ENCODE measurements at regions of chr14 and their contacts with region 1.

Region 1: DNA sequence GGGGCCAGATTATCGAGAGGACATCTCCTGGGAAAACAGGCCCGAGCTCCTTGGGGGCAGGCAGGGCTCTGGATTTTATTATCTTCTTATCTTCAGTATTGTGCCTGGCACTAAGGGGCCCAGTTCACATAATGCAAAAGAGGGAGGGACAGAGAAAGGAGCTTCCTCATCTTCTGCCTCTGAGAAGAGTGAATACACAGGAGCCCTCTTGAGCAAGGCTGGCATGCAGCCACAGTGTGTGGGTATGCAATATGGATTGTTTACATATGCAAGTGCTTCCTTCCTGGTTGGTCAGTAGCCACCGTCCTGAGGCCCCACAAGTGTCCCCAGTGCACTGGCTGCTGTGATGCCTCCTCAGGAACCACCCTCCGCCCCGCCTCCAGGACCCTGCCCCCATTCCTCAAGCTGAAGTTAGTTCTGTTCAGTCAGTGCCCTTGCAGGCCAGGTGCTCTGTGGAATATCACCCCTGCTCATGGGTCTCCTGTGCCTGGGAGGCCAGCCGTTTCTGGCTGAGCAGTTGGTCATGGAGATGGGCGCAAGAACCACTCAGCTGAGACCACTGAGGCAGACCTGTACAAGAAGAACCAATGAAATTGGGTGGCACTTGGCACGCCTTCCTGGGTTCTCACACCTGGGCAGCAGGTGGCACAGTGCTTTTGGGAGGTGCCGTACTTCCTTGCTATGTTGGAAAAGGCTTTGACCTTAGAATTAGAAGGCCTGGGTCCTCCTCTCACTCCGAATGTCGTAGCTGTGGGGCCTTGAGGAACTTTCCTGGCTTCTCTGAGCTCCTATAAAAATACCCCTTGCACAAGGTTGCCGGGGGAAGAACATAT is 35.1 kb upstream of the ACTN1 start:
- DNase-seq: no peak
- H3K4me3 ChIP-seq: no peak overlapping the region
- H3K27ac ChIP-seq: no peak overlapping the region; the same call in 1 of the 2 replicates
- H3K4me1 ChIP-seq: peaks cover 3 to 11% (median 6%) of the 10 kb centered on the region in 4 experiments
- H3K27me3 ChIP-seq: no peaks in the 10 kb centered on the region
- CTCF ChIP-seq: no peak
- EP300 ChIP-seq: no peak
- POLR2A ChIP-seq: no peak
- RAD21 ChIP-seq: no peak

Region 2: GRCh38 chr14:68918612-68919011 is 95.5 kb before region 1 on chr14:
- CTCF ChIA-PET with region 1: no interaction called
- POLR2A ChIA-PET with region 1: no interaction called
- DNase-seq: no peak
- H3K4me3 ChIP-seq: no peak overlapping the region
- H3K27ac ChIP-seq: no peak overlapping the region
- H3K4me1 ChIP-seq: peaks cover 0 to 13% (median 9%) of the 10 kb centered on the region in 4 experiments; a peak in 5 of 7 replicates
- H3K27me3 ChIP-seq: no peaks in the 10 kb centered on the region
- CTCF ChIP-seq: no peak
- EP300 ChIP-seq: no peak
- POLR2A ChIP-seq: no peak
- RAD21 ChIP-seq: no peak

Region 3: DNA sequence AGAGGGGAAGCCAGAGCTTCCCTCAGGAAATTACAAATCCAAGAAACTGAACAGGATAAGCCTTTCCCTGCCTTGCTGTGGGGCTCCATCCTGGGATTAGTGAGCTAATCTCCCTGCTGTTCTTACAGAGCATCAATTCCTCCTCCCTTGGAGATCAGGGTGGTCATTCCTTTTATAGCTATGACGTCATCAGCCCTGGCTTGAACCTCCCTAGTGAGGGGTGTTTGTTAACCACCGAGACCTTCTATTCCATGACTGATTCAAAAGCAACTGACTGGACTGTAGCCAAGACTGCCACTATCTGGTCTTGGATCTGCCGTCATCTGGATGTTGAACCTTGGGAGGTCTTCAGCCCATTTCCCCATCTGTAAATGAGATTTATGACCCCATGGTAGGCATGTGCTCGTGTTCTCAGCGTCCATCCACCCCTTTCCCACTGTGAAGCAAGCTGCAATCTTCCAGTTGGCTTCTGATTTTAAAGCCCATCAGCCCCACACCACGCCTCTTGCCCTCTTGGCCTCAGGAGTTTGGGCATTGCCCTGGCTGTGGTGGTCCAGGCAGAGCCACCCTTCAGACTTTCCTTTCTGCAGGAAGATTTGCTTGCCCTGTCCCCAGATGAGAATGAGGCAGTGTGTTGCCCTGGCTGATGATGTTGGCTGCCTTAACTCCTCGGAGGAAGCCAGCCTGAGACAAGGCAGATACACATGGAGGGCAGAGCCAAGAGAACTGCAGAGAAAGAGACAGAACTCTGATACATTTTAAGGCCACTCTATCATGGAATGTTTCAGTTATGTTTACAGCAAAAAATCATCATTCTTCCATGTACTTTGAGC is 24.5 kb after region 1 on chr14:
- CTCF ChIA-PET with region 1: interaction called, 11 read pairs
- POLR2A ChIA-PET with region 1: no interaction called
- DNase-seq: no peak
- H3K4me3 ChIP-seq: no peak overlapping the region
- H3K27ac ChIP-seq: no peak overlapping the region
- H3K4me1 ChIP-seq: peaks cover 3 to 20% (median 12%) of the 10 kb centered on the region in 4 experiments
- H3K27me3 ChIP-seq: no peaks in the 10 kb centered on the region
- CTCF ChIP-seq: no peak
- EP300 ChIP-seq: no peak
- POLR2A ChIP-seq: no peak
- RAD21 ChIP-seq: no peak